A549 (cell line): ENCODE measurements at regions of chr11 and their contacts with region 1.

Region 1: GRCh38 chr11:63023841-63024648 is 8.4 kb upstream of the SLC22A8 start:
- DNase-seq: peak; percentile 74 to 81
- ATAC-seq: peak; percentile 82 to 94
- H3K4me3 ChIP-seq: no peak overlapping the region
- H3K27ac ChIP-seq: no peak overlapping the region
- H3K4me1 ChIP-seq: no peaks in the 10 kb centered on the region
- CTCF ChIP-seq: peak; percentile 86
- EP300 ChIP-seq: no peak
- POLR2A ChIP-seq: no peak
- RAD21 ChIP-seq: peak; percentile 81 to 89

Region 2: GRCh38 chr11:62922658-62923431 is 101.2 kb before region 1 on chr11:
- CTCF ChIA-PET with region 1: interaction called, 461 read pairs
- POLR2A ChIA-PET with region 1: no interaction called
- DNase-seq: peak; percentile 50 to 59
- ATAC-seq: peak; percentile 36 to 71; a peak in 5 of 6 replicates
- H3K4me3 ChIP-seq: peak overlapping the region; percentile 49
- H3K27ac ChIP-seq: peak overlapping the region; percentile 36 to 53; a peak in 5 of 6 replicates
- H3K4me1 ChIP-seq: peaks cover 26% of the 10 kb centered on the region
- CTCF ChIP-seq: peak; percentile 21; the same call in 2 of the 3 replicates
- EP300 ChIP-seq: no peak
- POLR2A ChIP-seq: no peak
- RAD21 ChIP-seq: peak in 1 of 2 experiments; percentile 47; a peak in 3 of 5 replicates

Region 3: DNA sequence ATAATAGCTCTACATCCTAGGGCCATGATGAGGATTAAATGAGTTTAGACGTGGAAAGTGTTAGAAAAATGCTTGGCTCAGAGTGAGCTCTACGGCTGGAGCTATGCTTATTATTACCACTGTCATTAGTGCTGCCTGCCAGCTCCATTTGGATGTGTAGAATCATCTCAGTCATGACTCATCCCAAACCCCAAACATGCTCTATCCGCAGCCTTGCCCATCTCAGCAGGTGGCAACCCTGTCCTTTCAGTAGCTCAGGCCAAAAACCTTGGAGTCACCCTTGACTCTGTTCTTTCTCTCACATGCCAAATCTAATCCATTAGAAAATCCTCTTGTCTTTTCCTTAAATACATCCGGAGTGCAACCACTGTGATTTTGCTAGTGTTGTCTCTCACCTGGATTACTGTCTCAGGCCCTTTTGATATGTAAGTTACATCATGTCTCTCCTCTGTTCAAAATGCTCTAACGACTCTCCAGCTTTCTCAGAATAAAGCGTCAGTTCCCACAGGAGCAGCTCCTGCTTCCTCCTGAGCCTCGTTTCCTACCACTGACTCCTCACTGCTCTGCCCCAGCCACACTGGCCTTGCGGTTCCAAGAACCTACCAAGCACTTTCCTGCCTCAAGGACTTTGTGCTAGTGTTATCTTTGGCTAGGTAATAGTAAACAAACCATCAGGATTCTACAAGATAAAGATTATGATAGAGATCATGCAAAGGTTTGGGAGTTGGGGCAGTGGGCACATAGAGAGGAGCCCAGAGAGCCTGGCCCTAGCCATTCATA is 92.4 kb before region 1 on chr11:
- CTCF ChIA-PET with region 1: interaction called, 14 read pairs
- POLR2A ChIA-PET with region 1: no interaction called
- DNase-seq: no peak
- ATAC-seq: no peak
- H3K4me3 ChIP-seq: no peak overlapping the region
- H3K27ac ChIP-seq: no peak overlapping the region
- H3K4me1 ChIP-seq: peaks cover 9% of the 10 kb centered on the region; the same call in 1 of the 3 replicates
- CTCF ChIP-seq: no peak
- EP300 ChIP-seq: no peak
- POLR2A ChIP-seq: no peak
- RAD21 ChIP-seq: no peak

Region 4: DNA sequence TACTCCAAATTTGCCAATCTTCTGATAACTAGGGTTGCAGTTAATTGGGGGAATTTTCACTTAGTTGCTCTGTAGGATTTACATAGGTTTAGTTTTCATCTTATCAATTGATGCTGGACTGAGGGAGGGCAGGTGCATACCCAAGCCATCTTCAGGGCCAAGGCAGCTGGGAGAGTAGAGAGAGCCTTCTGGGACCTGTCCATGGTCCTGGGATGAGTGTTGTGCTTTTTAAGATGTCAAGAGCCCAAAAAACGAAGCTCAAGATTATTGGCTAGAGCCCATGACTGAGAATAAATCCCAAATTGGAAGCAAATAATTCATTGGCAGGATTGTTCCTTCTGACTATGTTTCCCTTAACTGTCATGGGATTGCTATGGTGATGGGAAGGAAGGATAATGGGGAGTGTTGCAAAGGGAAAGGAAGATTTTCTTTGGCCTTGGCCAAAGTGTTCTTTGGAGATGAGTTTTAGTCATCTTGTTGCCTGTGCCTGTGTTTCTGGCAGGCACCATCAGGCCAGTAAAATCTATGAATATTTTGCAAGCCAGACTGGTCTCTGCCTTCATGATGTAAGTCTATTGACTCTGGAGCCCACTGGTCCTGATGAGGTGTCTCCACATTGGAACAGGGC is 43.8 kb before region 1 on chr11:
- CTCF ChIA-PET with region 1: interaction called, 14 read pairs
- POLR2A ChIA-PET with region 1: no interaction called
- DNase-seq: no peak
- ATAC-seq: no peak
- H3K4me3 ChIP-seq: no peak overlapping the region
- H3K27ac ChIP-seq: no peak overlapping the region
- H3K4me1 ChIP-seq: no peaks in the 10 kb centered on the region
- CTCF ChIP-seq: no peak
- EP300 ChIP-seq: no peak
- POLR2A ChIP-seq: no peak
- RAD21 ChIP-seq: no peak

Region 5: DNA sequence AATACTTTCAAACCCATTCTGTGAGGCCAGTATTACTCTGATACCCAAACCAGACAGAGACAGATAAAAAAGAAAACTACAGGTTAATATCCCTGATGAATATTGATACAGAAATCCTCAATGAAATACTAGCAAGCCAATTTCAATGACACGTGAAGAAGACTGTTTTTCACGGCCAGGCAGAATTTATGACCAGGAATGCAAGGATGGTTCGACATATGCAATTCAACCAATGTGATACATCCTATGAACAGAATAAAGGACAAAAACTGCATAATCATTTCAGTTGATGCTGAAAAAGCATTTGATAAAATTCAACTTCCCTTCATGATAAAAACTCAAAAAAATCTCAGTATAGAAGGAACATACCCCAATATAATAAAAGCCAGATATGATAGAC is 75.5 kb after region 1 on chr11:
- CTCF ChIA-PET with region 1: no interaction called
- POLR2A ChIA-PET with region 1: no interaction called
- DNase-seq: no peak
- ATAC-seq: no peak
- H3K4me3 ChIP-seq: no peak overlapping the region
- H3K27ac ChIP-seq: no peak overlapping the region
- H3K4me1 ChIP-seq: no peaks in the 10 kb centered on the region
- CTCF ChIP-seq: no peak
- EP300 ChIP-seq: no peak
- POLR2A ChIP-seq: no peak
- RAD21 ChIP-seq: no peak